ENCODE measurements at regions of chrX and their contacts with region 1.

Region 1: DNA sequence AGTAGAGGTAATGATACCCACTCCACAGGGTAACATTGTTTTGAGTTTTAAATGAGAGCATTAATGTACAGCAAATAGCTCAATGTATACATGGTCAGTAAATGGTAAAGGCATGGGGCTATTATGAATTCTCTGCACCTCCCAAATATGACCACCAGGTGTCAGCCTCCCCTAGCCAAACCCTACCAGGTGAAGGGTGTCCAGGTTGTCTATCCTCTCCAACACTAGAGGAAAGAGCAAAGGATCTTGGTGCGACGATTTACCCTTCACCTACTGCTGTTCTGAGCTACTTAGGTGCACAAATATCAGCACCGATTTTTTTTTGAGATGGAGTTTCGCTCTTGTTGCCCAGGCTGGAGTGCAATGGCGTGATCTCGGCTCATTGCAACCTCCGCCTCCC is 26.5 kb upstream of the XIAP start:
- DNase-seq: peak; percentile 64 to 68
- ATAC-seq: peak; percentile 83 to 86
- H3K4me3 ChIP-seq: no peak overlapping the region
- H3K27ac ChIP-seq: peak overlapping the region; percentile 67 to 77
- H3K4me1 ChIP-seq: peaks cover 44% of the 10 kb centered on the region
- CTCF ChIP-seq: peak; percentile 73
- EP300 ChIP-seq: no peak
- POLR2A ChIP-seq: no peak
- RAD21 ChIP-seq: peak; percentile 89 to 95

Region 2: DNA sequence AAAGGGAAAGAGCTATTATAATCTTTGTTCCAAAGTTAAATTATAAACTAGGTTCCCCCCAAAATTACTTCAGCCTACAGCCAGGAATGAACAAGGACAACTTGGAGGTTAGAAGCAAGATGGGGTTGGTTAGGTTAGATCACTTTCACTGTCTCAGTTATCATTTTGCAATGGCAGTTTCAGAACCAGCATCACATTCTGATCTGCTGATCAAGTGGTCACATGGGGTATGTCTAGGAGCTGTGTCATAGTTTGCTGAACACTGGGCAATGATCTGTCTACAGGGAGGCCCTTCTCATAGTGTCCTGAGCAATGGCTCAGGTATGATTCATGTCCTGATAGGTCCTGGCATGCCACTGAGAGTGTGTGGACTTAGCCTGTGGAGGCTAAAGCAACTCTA is 15.1 kb before region 1 on chrX:
- CTCF ChIA-PET with region 1: interaction called, 17 read pairs
- POLR2A ChIA-PET with region 1: interaction called, 4 read pairs
- DNase-seq: peak; percentile 68 to 87
- ATAC-seq: peak; percentile 87 to 94
- H3K4me3 ChIP-seq: no peak overlapping the region
- H3K27ac ChIP-seq: peak overlapping the region; percentile 83 to 86
- H3K4me1 ChIP-seq: peaks cover 31% of the 10 kb centered on the region
- CTCF ChIP-seq: no peak
- EP300 ChIP-seq: peak in 1 of 2 experiments; percentile 31; a peak in 2 of 5 replicates
- POLR2A ChIP-seq: no peak
- RAD21 ChIP-seq: no peak

Region 3: DNA sequence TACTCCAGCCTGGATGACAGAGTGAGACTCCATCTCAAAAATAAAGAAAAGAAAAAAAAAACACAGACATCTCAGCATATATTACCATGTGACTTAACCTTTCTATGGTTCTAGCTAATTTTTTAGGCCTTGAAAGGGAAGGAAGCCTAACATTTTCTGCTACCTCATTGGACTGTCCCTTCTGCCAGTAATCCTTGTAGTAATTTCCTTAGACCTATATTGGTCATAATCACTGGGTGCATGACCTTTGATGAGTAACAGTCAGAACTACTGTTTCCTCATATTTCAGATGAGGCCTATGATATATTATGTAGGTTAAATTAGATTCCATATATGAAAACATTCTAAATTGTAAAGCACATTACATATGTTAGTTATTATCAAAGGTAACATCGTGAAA is 36.1 kb after region 1 on chrX:
- CTCF ChIA-PET with region 1: interaction called, 13 read pairs
- POLR2A ChIA-PET with region 1: no interaction called
- DNase-seq: peak in 1 of 2 experiments; percentile 15
- ATAC-seq: peak in 1 of 2 experiments; percentile 43; a peak in 2 of 6 replicates
- H3K4me3 ChIP-seq: no peak overlapping the region
- H3K27ac ChIP-seq: 0 out of 6 replicates have a peak overlapping the region, but pooled peaks of 1 of the 2 experiments have one; percentile 17
- H3K4me1 ChIP-seq: peaks cover 7% of the 10 kb centered on the region
- CTCF ChIP-seq: no peak
- EP300 ChIP-seq: no peak
- POLR2A ChIP-seq: no peak
- RAD21 ChIP-seq: no peak

Region 4: DNA sequence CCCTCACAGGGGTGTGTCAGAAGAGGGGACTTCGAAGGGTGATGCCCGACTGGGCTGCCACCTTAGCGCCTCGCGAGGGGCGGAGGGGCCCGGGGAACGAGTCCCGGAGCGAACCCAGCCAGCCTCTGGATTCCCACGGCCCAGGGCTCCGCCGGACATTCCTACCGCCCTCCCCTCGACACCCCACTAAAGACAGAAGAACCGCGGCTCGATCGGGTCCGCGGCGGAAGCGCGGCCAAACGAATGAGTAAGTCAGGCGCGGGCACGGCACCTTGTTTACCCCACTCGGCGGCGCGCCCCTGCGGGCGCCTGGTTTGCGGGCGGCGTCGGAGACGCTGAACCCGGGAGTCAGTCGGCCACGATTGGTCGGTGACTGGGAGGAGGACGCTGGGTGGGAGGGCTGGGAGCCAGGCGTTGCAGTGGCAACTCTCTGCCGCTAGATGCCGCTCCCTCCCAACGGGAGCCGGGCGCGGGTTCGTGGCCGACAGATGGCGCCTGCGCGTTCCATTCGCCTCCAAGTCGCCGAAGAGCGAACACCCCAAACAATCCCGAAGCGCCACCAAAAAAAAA is 126.7 kb after region 1 on chrX:
- CTCF ChIA-PET with region 1: interaction called, 18 read pairs
- POLR2A ChIA-PET with region 1: interaction called, 3 read pairs
- DNase-seq: peak; percentile 87 to 92
- ATAC-seq: peak; percentile 75 to 85
- H3K4me3 ChIP-seq: peak overlapping the region; percentile 94
- H3K27ac ChIP-seq: peak overlapping the region; percentile 100
- H3K4me1 ChIP-seq: peaks cover 20% of the 10 kb centered on the region
- CTCF ChIP-seq: peak; percentile 94
- EP300 ChIP-seq: no peak
- POLR2A ChIP-seq: peak; percentile 37; the same call in 1 of the 2 replicates
- RAD21 ChIP-seq: peak; percentile 78 to 91

Region 5: DNA sequence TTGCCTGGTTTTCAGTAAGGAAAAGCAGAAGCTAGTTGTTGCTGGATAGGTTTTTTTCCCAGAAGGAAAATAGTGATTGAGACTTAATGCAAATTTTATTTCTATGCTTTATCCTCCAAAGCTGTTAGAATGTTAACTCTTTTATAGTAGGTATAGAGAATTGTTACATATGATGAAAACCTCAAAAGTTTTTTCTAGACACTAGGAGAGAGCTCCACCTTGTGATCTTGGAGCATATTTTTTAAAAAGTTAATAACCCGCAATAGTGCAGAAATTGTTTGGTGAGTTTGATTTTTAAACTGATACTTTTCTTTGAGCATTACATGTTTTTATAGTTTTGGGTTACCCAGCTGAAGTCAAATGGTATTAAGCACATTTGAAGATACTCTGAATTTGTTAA is 184.6 kb after region 1 on chrX:
- CTCF ChIA-PET with region 1: interaction called, 18 read pairs
- POLR2A ChIA-PET with region 1: no interaction called
- DNase-seq: no peak
- ATAC-seq: no peak
- H3K4me3 ChIP-seq: no peak overlapping the region
- H3K27ac ChIP-seq: no peak overlapping the region
- H3K4me1 ChIP-seq: peaks cover 14% of the 10 kb centered on the region; the same call in 2 of the 3 replicates
- CTCF ChIP-seq: peak; percentile 25
- EP300 ChIP-seq: no peak
- POLR2A ChIP-seq: no peak
- RAD21 ChIP-seq: peak; percentile 15 to 37; a peak in 1 of 5 replicates

Region 6: GRCh38 chrX:124045109-124045508 is 211.7 kb after region 1 on chrX:
- CTCF ChIA-PET with region 1: no interaction called
- POLR2A ChIA-PET with region 1: no interaction called
- DNase-seq: no peak
- ATAC-seq: no peak
- H3K4me3 ChIP-seq: no peak overlapping the region
- H3K27ac ChIP-seq: no peak overlapping the region
- H3K4me1 ChIP-seq: no peaks in the 10 kb centered on the region
- CTCF ChIP-seq: no peak
- EP300 ChIP-seq: no peak
- POLR2A ChIP-seq: no peak
- RAD21 ChIP-seq: no peak

Region 7: DNA sequence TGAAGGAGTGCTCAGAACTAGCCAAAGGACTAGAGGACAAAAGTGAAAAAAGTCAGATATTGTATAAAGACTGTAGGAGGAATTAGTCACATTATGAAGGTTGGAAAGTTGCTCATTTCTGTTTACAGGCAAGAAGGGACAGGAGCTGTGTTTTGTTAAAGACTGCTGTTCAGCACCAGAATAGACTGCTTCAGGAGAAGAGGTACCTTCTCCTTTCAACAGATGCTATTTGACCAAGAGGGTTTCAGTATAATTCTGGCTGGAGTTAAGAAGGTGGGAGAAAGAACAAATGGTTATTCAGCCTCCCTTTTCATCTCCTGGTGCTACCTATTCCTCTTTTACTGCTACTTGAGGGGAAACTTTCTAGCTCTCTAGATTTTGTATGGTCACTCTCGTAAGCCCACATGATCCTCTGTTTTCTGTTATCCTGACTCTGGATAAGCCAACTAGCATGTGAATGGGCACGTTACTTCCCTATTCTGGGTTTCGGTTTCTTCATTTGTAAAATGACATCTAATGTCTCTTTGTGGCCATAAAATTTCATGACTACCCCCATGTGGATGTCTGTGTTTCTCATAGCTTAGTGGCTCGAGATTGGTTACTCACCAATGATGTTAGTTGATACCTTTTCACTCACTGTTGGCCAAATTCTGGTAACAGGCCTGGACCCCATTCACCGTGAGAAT is 581.9 kb after region 1 on chrX:
- CTCF ChIA-PET with region 1: no interaction called
- POLR2A ChIA-PET with region 1: no interaction called
- DNase-seq: no peak
- ATAC-seq: no peak
- H3K4me3 ChIP-seq: no peak overlapping the region
- H3K27ac ChIP-seq: no peak overlapping the region
- H3K4me1 ChIP-seq: no peaks in the 10 kb centered on the region
- CTCF ChIP-seq: no peak
- EP300 ChIP-seq: no peak
- POLR2A ChIP-seq: no peak
- RAD21 ChIP-seq: no peak